Activated B cell treated with CpG ODN at 0.5 μM for 24 hours (primary cell): ENCODE measurements at regions of chr12 and their contacts with region 1.

Region 1: DNA sequence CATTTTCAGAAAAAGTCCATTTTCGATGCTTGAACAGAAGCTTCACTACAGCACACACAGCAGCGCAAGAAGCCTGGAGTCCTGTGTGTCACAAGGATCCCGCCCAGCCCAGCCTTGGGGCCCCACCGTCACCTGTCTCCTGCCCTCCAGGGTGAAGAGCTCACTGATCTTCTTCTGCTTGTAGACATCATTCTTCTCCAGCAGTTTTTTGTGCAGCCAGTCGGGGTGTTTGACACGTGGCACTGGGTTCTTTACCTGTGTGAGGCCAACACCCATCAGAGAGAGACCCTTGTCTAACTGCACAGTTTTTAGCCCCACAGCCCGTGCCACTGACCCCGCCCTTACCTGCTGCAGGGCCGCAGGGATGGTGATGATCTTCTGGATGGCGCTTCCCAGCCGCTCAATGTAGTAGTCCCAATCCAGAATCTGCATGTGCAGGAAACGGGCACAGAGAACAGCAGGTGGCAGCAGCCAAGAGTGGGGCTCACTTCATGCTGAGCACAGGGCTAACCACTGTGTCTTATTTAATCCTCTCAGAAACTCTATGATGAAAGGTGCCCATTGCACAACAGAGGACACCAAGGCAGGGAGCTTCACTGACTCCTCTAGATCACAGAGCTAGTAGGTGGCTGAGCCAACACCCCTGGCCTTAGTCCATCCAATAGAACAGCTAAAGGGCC is 30.0 kb downstream of the POLE start:
- DNase-seq: no peak
- ATAC-seq: no peak
- H3K4me3 Mint-ChIP-seq: no peak overlapping the region
- H3K27ac Mint-ChIP-seq: no peak overlapping the region
- H3K4me1 Mint-ChIP-seq: no peaks in the 10 kb centered on the region
- H3K27me3 Mint-ChIP-seq: no peaks in the 10 kb centered on the region
- CTCF ChIP-seq: no peak

Region 2: GRCh38 chr12:132554842-132555630 is 102.1 kb before region 1 on chr12:
- CTCF ChIA-PET with region 1: no interaction called
- POLR2A ChIA-PET with region 1: interaction called, 11 read pairs
- intact Hi-C with region 1: no loop called
- DNase-seq: no peak
- ATAC-seq: no peak
- H3K4me3 Mint-ChIP-seq: no peak overlapping the region
- H3K27ac Mint-ChIP-seq: no peak overlapping the region
- H3K4me1 Mint-ChIP-seq: peaks cover 15% of the 10 kb centered on the region
- H3K27me3 Mint-ChIP-seq: no peaks in the 10 kb centered on the region
- CTCF ChIP-seq: no peak

Region 3: GRCh38 chr12:132640936-132641335 is 16.2 kb before region 1 on chr12:
- CTCF ChIA-PET with region 1: no interaction called
- POLR2A ChIA-PET with region 1: no interaction called
- intact Hi-C with region 1: no loop called
- DNase-seq: no peak
- ATAC-seq: no peak
- H3K4me3 Mint-ChIP-seq: no peak overlapping the region
- H3K27ac Mint-ChIP-seq: no peak overlapping the region
- H3K4me1 Mint-ChIP-seq: no peaks in the 10 kb centered on the region
- H3K27me3 Mint-ChIP-seq: no peaks in the 10 kb centered on the region
- CTCF ChIP-seq: no peak